KBM-7 (cell line): ENCODE measurements at regions of chr2 and their contacts with region 1.

Region 1: DNA sequence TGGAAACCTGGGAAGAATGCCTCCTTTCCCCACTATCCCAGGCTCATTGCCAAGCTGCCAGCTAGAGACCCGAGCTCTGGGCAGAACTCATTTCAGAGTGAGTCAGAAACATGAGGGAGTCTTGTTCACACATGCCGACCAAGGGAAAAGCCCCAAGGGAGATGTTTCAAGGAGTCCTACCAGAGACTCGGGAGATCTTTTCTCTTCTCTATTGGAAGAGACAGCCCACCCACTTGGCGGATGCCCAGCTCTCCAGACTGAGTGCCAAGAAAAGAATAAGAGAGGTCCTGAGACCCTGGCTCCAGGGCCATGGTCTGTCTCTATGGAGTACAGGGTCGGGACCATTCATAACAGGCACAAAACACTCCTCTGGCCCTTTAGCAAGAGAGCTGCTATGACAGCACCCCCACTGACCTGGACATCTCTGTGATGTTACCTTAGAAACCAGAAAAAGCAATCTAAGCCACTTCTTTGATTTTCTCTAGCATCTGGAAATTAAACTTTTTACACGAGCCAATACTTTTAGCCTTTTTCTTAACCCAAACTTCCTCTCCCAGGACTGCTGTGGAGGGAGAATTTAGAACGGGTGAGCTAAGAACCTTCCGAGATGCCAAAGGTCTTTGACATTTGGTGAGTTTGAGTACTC is 18.5 kb upstream of the IGFBP5 start:
- DNase-seq: no peak

Region 2: DNA sequence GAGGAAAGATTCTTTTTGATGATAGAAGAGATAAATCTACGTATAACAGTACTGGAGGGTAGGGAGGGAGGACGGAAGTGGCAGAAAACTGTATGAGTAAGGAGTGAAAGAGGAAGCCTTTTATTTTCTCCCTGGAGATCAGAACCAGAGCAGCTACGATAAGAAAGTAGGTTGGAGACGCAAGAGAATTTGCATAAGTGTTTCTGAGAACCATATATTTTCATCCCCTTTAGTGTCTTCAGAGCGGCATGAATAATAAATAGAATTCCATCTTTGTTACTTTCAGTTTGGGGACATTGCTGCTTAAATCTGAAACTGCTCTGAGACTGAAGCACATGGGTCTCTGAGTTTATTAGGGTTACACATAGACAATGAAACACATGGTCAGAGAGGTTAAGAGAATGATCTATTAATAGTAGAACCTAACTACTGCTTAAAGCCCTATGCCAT is 376.2 kb after region 1 on chr2:
- in situ Hi-C with region 1: no loop called
- DNase-seq: peak; percentile 19

Region 3: GRCh38 chr2:217510771-217511291 is 797.0 kb after region 1 on chr2:
- in situ Hi-C with region 1: loop called (anchors 25 kb)
- DNase-seq: peak; percentile 77